ENCODE measurements at regions of chr16 and their contacts with region 1.

Region 1: GRCh38 chr16:1782352-1783091 is at the starts of genes NUBP2 and SPSB3:
- DNase-seq: peak; percentile 100
- H3K4me3 Mint-ChIP-seq: peak within 1 kb of the TSS; percentile 86
- H3K27ac Mint-ChIP-seq: peak within 1 kb of the TSS; percentile 89
- H3K4me1 Mint-ChIP-seq: peaks cover 28% of the 10 kb centered on the region
- H3K27me3 Mint-ChIP-seq: no peaks in the 10 kb centered on the region

Region 2: GRCh38 chr16:1929578-1930337 is 147.2 kb after region 1 on chr16:
- CTCF ChIA-PET with region 1: interaction called, 10 read pairs
- DNase-seq: peak; percentile 91
- H3K4me3 Mint-ChIP-seq: peak overlapping the region; percentile 35
- H3K27ac Mint-ChIP-seq: no peak overlapping the region
- H3K4me1 Mint-ChIP-seq: peaks cover 4% of the 10 kb centered on the region
- H3K27me3 Mint-ChIP-seq: peaks cover 39% of the 10 kb centered on the region